Activated CD8-positive, alpha-beta memory T cell treated with anti-CD3 and anti-CD28 coated beads, Interleukin-2, amount 10 ng/mL, durations not matched to agents 7 days and 5 days (primary cell): ENCODE measurements at regions of chr1 and their contacts with region 1.

Region 1: GRCh38 chr1:31182352-31182751 is 57.3 kb downstream of the NKAIN1 start:
- DNase-seq: peak; percentile 65
- ATAC-seq: peak; percentile 58
- H3K4me3 Mint-ChIP-seq: no peak overlapping the region
- H3K27ac Mint-ChIP-seq: no peak overlapping the region
- H3K4me1 Mint-ChIP-seq: peaks cover 10% of the 10 kb centered on the region
- H3K27me3 Mint-ChIP-seq: peaks cover 28% of the 10 kb centered on the region

Region 2: DNA sequence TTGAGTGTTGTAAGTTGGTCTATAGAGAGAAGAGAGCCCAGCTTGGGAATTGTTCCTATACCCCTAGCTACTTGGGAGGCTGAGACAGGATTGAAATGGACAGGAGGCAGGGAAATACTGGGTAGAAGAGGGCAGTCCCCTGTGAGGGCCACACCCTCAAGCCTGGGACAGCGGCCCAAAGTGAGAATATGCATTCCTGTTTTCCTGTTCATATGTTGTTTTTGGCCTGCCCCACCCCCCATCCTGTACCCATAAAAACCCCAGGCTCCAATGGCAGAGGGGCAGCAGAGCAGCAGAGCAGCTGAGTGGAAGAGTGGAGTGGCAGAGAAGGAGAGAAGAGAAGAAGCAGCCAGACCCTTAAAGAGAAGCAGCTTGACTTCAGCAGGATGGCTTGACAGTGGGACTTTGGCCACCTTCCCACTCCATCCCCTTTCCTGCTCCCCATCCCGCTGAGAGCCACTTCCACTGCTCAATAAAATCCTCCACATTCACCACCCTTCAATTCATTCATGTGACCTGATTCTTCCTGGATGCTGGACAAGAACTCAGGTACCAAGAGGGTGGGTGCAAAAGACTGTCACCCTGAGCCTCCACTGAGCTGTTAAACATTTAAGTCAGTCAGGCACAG is 46.3 kb before region 1 on chr1:
- CTCF ChIA-PET with region 1: no interaction called
- DNase-seq: no peak
- ATAC-seq: no peak
- H3K4me3 Mint-ChIP-seq: no peak overlapping the region
- H3K27ac Mint-ChIP-seq: no peak overlapping the region
- H3K4me1 Mint-ChIP-seq: no peaks in the 10 kb centered on the region
- H3K27me3 Mint-ChIP-seq: no peaks in the 10 kb centered on the region

Region 3: GRCh38 chr1:31170486-31170735 is 11.9 kb before region 1 on chr1:
- CTCF ChIA-PET with region 1: interaction called, 10 read pairs
- DNase-seq: no peak
- ATAC-seq: no peak
- H3K4me3 Mint-ChIP-seq: no peak overlapping the region
- H3K27ac Mint-ChIP-seq: peak overlapping the region; percentile 81
- H3K4me1 Mint-ChIP-seq: peaks cover 16% of the 10 kb centered on the region
- H3K27me3 Mint-ChIP-seq: peaks cover 3% of the 10 kb centered on the region

Region 4: DNA sequence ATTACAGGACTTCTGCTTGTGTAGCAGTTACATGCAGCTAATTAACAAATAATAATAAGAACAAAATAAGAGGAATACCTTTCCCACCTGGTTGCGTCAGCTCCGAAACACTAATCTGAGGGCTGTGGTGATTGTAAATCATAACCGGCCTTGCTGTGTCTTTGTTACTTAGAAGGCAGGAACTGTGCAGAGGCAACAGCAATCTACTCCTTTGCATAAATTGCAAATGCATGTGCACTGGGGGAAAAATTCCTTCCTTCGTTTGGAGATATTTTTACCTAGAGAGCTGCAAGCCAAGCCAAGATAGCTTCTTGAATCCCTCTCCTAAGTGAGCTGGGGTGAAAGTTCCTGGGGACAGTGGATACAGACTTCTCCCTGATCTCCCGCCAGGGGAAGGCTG is 11.4 kb after region 1 on chr1:
- CTCF ChIA-PET with region 1: interaction called, 10 read pairs
- DNase-seq: no peak
- ATAC-seq: no peak
- H3K4me3 Mint-ChIP-seq: no peak overlapping the region
- H3K27ac Mint-ChIP-seq: no peak overlapping the region
- H3K4me1 Mint-ChIP-seq: no peaks in the 10 kb centered on the region
- H3K27me3 Mint-ChIP-seq: no peaks in the 10 kb centered on the region